Mucosa of descending colon (tissue), 3 donors: ENCODE measurements at regions of chr17 and their contacts with region 1.

Region 1: GRCh38 chr17:43576563-43577229 is 30.6 kb upstream of the ETV4 start:
- DNase-seq: peak in 2 of 3 donors; percentile 75 to 76
- ATAC-seq: peak; percentile 71
- H3K4me3 ChIP-seq: no peak overlapping the region
- H3K4me1 ChIP-seq: peaks cover 12% of the 10 kb centered on the region
- CTCF ChIP-seq: peak; percentile 82

Region 2: GRCh38 chr17:42878123-42878880 is 698.4 kb before region 1 on chr17:
- intact Hi-C with region 1: no loop called
- DNase-seq: no peak
- ATAC-seq: peak; percentile 31
- H3K4me3 ChIP-seq: no peak overlapping the region
- H3K4me1 ChIP-seq: no peaks in the 10 kb centered on the region
- CTCF ChIP-seq: no peak

Region 3: GRCh38 chr17:43467981-43468581 is 108.6 kb before region 1 on chr17:
- intact Hi-C with region 1: no loop called
- DNase-seq: no peak
- ATAC-seq: no peak
- H3K4me3 ChIP-seq: no peak overlapping the region
- H3K4me1 ChIP-seq: peaks cover 6% of the 10 kb centered on the region
- CTCF ChIP-seq: no peak

Region 4: DNA sequence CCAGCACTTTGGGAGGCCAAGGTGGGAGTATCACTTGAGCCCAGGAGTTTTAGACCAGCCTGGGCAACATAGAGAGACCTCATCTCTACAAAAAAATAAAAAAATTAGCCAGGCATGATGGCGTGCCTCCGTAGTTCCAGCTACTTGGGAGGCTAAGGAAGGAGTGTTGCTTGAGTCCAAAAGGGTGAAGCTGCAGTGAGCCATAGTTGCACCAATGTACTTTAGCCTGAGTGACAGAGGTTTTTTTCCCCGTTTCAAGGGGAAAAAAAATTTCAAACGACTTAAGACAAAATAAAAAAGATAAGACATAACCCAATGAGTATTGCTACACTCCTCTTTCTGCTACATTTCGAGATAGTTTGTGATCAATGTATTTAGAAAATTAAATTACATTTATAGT is 86.1 kb before region 1 on chr17:
- intact Hi-C with region 1: no loop called
- DNase-seq: no peak
- ATAC-seq: no peak
- H3K4me3 ChIP-seq: no peak overlapping the region
- H3K4me1 ChIP-seq: peaks cover 6% of the 10 kb centered on the region
- CTCF ChIP-seq: no peak

Region 5: GRCh38 chr17:43673516-43674323 is 97.0 kb after region 1 on chr17:
- intact Hi-C with region 1: loop called in 1 of 2 experiments (anchors 5 kb)
- DNase-seq: peak in 2 of 3 donors; percentile 83 to 92
- ATAC-seq: peak; percentile 72
- H3K4me3 ChIP-seq: no peak overlapping the region
- H3K4me1 ChIP-seq: peaks cover 13% of the 10 kb centered on the region
- CTCF ChIP-seq: peak; percentile 92

Region 6: GRCh38 chr17:43760254-43760852 is 183.7 kb after region 1 on chr17:
- intact Hi-C with region 1: loop called in 1 of 2 experiments (anchors 10 kb)
- DNase-seq: peak; percentile 89 to 98 (median 97)
- ATAC-seq: peak; percentile 99
- H3K4me3 ChIP-seq: no peak overlapping the region
- H3K4me1 ChIP-seq: peaks cover 7% of the 10 kb centered on the region
- CTCF ChIP-seq: peak; percentile 93